Ovary (tissue), 10 donors: ENCODE measurements at regions of chr9 and their contacts with region 1.

Region 1: DNA sequence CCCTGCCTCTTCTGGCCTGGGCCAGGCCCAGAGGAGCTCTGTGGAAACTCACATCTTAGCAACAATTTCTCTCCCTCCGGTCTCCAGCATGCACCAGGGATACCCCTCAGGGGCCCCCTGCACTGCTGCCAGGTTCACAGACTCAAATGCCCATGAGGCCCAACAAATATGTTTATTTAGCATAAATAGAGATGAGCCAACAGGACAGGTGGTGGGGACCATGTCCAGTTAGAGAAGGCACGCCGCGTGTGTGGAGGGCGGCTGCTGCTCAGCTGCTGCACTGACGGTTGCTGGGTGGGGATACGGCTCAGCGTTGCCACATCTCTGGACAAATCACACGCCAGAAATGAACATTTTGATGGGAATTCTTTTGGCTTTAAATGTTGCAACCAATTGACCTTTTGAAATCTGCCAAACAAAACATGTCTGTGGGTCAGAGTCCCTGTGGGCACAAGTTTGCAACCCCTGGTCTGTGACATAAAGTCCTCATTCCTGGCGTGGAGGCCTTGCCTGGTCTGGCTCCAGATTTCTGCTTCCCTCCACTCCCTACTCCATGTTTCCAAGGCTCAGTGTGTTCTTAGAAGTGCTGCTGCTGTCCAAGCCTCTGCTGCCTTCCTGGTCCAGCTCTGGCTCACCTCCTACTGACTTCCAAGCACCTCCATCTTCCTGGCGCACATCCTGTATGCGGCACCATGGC is 88.9 kb downstream of the AMBP start:
- DNase-seq: peak in 1 of 5 donors; percentile 48
- H3K4me3 ChIP-seq: no peak overlapping the region
- H3K27ac ChIP-seq: no peak overlapping the region
- H3K4me1 ChIP-seq: peaks cover 20% of the 10 kb centered on the region
- H3K27me3 ChIP-seq: no peaks in the 10 kb centered on the region
- CTCF ChIP-seq: no peak
- EP300 ChIP-seq: no peak
- POLR2A ChIP-seq: no peak

Region 2: GRCh38 chr9:113886466-113886865 is 102.7 kb before region 1 on chr9:
- intact Hi-C with region 1: loop called in 1 of 4 experiments (anchors 10 kb)
- DNase-seq: no peak
- H3K4me3 ChIP-seq: peak overlapping the region; percentile 23
- H3K27ac ChIP-seq: peak overlapping the region in 1 of 2 donors; percentile 39
- H3K4me1 ChIP-seq: peaks cover 22% of the 10 kb centered on the region
- H3K27me3 ChIP-seq: no peaks in the 10 kb centered on the region
- CTCF ChIP-seq: no peak
- EP300 ChIP-seq: no peak
- POLR2A ChIP-seq: no peak

Region 3: DNA sequence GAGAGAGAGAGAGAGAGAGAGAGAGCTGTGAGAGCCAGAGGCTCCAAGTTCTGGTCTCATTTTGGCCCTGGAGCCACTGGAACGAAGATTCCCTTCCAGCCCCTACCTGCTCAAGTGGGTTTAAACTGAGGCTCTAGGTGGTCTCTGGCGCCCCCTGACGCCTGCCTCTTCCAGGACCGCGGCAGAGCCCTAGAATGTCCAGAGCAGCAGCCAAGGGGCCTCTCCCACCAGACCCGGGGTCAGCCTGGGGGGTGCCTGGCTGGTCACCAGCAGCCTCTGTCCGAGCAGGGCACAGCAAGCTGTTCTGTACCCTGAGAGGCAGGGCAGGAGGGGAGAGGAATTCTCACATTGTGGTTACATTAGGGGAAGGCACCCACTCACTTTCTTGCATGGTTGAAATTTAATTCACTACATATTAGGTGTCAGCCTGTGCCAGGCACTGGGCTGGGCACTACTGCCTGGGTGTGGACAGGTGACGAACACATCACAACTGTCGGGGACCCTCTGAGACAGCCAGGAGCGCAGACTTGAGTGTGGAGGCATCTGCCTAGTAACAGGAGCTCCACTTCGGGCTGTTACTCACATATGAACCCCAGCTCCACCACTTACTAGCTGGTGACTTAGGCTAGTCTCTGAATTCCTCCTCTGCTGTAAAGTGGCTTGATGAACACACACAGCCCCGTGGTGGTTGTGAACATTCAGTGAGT is 44.4 kb after region 1 on chr9:
- intact Hi-C with region 1: no loop called
- DNase-seq: peak in 4 of 5 donors; percentile 15 to 62 (median 47)
- H3K4me3 ChIP-seq: no peak overlapping the region
- H3K27ac ChIP-seq: no peak overlapping the region
- H3K4me1 ChIP-seq: peaks cover 3% of the 10 kb centered on the region
- H3K27me3 ChIP-seq: no peaks in the 10 kb centered on the region
- CTCF ChIP-seq: peak in 1 of 3 donors; percentile 41
- EP300 ChIP-seq: no peak
- POLR2A ChIP-seq: no peak